H1 (cell line): ENCODE measurements at regions of chr12 and their contacts with region 1.

Region 1: DNA sequence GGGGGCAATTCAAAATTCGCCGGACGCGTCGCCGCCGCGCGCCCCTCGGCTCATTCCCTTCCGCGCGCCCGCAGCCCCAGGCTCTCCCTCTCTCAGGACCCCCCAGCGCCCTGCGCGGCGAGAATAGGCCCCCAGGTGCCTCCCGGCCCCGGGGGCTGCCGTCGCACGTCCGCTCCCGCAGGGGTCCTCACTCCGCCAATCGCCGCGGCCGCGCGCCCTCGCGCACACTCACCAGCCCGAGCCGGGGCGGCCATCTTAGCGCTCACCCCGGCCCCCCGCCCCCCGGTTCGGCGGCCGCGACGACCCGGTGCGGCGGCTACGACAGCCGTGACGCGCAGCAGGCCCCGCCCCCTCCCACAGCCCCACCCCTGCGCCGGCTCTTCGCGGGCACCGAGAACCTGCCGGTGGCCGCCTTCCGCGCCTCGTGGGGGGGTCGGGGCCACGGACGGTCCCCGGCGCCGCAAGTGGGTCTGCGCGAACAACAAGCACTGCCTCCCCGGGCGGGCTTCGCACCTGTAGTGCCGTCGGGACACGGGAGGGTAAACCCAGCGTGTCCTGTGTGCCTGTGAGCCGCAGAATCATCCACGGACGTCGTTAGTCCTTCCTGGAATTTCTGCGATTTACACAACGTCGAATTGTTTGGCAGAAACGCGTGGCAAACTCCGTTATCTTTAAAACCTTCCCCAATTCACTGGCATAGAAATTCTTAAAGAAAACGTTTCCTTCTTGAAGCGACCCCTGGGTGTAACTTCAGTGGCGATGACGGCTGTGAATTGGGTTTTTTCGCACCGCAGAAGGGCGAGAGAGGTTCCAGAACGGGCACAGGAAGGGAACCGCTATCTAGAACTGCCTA is 2.5 kb downstream of the USP44 start:
- DNase-seq: peak in 1 of 2 experiments; percentile 83
- H3K4me3 ChIP-seq: peak overlapping the region; percentile 71 to 95 (median 88)
- H3K27ac ChIP-seq: peak overlapping the region; percentile 94
- H3K4me1 ChIP-seq: peaks cover 0 to 12% (median 6%) of the 10 kb centered on the region in 4 experiments; a peak in 5 of 7 replicates
- H3K27me3 ChIP-seq: no peaks in the 10 kb centered on the region
- CTCF ChIP-seq: no peak
- EP300 ChIP-seq: no peak
- POLR2A ChIP-seq: peak in 1 of 2 experiments; percentile 64; a peak in 2 of 3 replicates
- RAD21 ChIP-seq: no peak

Region 2: GRCh38 chr12:95424271-95424994 is 124.3 kb before region 1 on chr12:
- CTCF ChIA-PET with region 1: no interaction called
- POLR2A ChIA-PET with region 1: no interaction called
- DNase-seq: no peak
- H3K4me3 ChIP-seq: no peak overlapping the region
- H3K27ac ChIP-seq: no peak overlapping the region
- H3K4me1 ChIP-seq: peaks cover 0 to 2% (median 0%) of the 10 kb centered on the region in 4 experiments; a peak in 1 of 7 replicates
- H3K27me3 ChIP-seq: no peaks in the 10 kb centered on the region
- CTCF ChIP-seq: no peak
- EP300 ChIP-seq: no peak
- POLR2A ChIP-seq: no peak
- RAD21 ChIP-seq: no peak

Region 3: DNA sequence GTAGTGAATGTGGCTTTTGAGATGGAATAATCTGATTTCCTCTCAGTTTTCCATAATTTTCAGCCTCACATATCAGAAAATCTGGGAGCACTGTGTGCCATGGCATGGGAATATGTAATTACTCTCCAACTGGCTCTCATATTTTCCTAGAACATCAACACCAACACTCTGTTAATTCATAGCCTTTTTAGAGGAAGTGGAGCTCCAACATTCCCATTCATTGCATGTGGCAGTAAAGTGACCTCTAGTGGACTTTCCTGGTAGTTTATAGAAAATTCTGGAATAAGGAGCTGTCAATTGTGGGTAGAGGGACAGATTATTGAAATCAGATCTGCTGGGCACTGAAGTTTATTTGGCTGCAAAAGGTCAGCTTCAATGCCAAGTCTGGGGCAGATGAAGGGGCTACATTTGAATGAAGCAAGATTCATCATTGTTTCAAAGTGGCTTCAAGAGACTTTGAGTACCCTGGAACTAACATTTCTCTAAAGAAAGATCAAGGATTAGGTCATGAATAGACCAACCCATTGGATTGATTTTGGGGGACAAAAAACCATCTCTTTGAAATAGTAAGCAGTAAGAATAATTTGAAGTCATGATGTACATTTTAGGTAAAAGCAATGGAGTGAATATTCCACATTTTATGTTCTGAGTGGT is 26.2 kb after region 1 on chr12:
- CTCF ChIA-PET with region 1: interaction called, 7 read pairs
- POLR2A ChIA-PET with region 1: interaction called, 36 read pairs
- DNase-seq: no peak
- H3K4me3 ChIP-seq: peak overlapping the region in 1 of 4 experiments; percentile 49; a peak in 3 of 8 replicates
- H3K27ac ChIP-seq: peak overlapping the region; percentile 60
- H3K4me1 ChIP-seq: peaks cover 0 to 9% (median 8%) of the 10 kb centered on the region in 4 experiments; a peak in 4 of 7 replicates
- H3K27me3 ChIP-seq: no peaks in the 10 kb centered on the region
- CTCF ChIP-seq: peak in 2 of 3 experiments; percentile 62 to 74; a peak in 3 of 4 replicates
- EP300 ChIP-seq: no peak
- POLR2A ChIP-seq: no peak
- RAD21 ChIP-seq: peak; percentile 61 to 78

Region 4: DNA sequence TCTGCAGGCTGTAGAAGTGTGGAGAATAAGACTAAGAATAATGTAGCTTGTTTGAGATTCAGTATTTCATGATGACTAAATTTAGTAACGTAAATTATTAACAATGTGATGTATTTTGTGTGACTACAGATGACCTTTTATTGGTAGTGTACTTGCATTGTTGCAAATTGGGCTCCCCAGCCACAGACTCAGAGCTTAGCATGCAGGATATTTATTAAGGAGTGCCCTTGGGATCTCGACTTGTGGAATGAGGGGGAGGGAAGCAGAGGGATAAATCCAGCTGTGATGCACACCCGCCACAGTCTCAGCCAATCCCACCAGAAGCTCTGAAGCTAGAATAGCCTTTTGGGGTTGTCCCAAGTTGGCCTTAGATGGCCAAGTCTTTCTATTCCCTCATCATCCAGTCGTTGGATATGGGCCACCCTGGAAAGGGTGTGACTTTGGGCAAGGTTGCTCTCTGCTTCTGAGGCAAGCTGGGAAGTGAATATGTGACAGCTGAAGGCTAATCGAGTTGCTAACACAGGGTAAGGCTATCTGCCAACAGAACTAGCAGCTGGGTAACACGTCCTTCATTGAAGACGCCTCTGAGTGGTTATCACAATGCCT is 44.6 kb after region 1 on chr12:
- CTCF ChIA-PET with region 1: no interaction called
- POLR2A ChIA-PET with region 1: no interaction called
- DNase-seq: no peak
- H3K4me3 ChIP-seq: no peak overlapping the region
- H3K27ac ChIP-seq: no peak overlapping the region
- H3K4me1 ChIP-seq: peaks cover 0 to 7% (median 2%) of the 10 kb centered on the region in 4 experiments; a peak in 3 of 7 replicates
- H3K27me3 ChIP-seq: no peaks in the 10 kb centered on the region
- CTCF ChIP-seq: no peak
- EP300 ChIP-seq: no peak
- POLR2A ChIP-seq: no peak
- RAD21 ChIP-seq: no peak